Colonic mucosa (tissue), 4 donors: ENCODE measurements at regions of chr6 and their contacts with region 1.

Region 1: DNA sequence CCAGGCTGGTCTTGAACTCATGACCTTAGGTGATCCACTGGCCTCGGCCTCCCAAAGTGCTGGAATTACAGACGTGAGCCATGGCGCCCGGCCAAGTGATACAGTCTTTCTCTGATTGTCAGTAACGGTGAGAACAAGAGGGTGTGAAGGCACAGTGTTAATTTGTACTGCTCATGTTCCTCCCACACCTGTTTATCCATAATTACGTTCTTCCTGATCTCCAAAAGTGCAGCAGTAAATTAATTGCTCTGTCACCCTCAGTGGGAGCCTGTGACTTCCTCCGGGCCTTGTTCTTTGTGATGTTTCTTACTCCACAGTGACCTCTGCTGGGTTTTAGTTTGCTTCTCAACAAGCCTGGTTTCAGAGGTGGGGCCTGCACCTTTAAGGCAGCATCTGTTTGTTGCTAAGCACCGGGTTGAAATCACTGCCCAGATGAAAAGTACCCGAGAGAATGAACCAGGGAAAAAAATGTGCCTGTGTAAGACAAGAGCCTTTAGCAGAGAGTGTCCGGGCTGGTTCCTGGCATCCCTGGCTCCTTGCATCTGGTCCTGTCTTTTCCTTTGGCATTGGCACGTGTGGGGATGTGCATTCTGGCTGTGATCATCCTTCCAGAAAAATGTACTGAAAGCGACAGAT is 89.1 kb upstream of the CLDN20 start:
- DNase-seq: peak; percentile 71
- H3K4me3 ChIP-seq: no peak overlapping the region
- H3K27ac ChIP-seq: no peak overlapping the region
- H3K4me1 ChIP-seq: peaks cover 8% of the 10 kb centered on the region
- H3K27me3 ChIP-seq: no peaks in the 10 kb centered on the region
- CTCF ChIP-seq: peak; percentile 46

Region 2: DNA sequence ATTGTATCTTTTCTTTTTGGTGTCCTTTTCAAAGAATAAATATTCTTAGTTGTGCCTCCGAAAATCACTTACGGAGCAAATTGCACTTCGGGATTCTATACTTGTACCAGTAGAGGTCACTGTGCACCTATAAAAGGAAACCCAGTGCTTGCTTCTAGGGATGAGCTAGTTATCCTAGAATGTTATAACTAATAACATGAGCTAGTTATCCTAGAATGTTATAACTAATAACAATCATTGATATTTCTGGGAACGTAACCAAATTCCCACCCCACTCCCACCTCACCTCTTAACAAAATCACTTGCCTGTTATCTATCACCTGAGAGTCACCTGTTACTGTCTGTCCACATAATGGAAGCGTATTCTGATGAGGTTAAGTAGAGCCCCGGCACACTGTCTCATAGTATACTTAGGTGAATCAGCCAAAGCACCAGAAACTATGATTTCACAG is 306.5 kb before region 1 on chr6:
- intact Hi-C with region 1: loop called (anchors 2 kb)
- DNase-seq: no peak
- H3K4me3 ChIP-seq: no peak overlapping the region
- H3K27ac ChIP-seq: no peak overlapping the region
- H3K4me1 ChIP-seq: no peaks in the 10 kb centered on the region
- H3K27me3 ChIP-seq: no peaks in the 10 kb centered on the region
- CTCF ChIP-seq: peak; percentile 65

Region 3: DNA sequence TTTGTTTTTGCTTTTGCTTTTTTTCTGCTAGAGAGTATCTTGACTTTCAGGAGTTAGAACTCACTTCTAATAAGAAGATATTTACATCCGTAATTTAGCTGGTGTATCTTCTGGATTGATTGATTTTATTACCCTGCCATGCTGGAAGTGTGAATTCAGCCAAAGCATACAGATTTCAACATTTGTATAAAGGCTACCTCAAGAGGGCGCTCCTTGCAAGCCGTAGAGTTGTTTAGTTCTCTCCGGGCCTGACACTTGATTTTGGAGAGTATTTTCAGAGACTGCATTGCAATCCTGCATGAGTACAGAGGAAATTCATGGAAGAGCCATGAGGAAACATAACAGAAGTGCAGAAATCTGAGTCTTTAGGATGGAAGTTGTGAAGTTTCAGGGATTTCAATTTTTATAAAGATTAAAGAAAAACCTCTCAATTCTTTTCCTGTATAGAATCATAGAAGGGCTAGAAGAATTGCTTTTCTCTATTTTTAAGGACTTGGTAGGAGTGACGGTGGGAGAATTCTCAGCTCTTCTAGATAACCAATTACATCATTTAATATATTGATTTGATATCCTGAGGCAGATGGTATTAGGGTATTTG is 246.3 kb before region 1 on chr6:
- intact Hi-C with region 1: loop called (anchors 2 kb)
- DNase-seq: peak; percentile 70
- H3K4me3 ChIP-seq: no peak overlapping the region
- H3K27ac ChIP-seq: no peak overlapping the region
- H3K4me1 ChIP-seq: no peaks in the 10 kb centered on the region
- H3K27me3 ChIP-seq: no peaks in the 10 kb centered on the region
- CTCF ChIP-seq: peak; percentile 54

Region 4: DNA sequence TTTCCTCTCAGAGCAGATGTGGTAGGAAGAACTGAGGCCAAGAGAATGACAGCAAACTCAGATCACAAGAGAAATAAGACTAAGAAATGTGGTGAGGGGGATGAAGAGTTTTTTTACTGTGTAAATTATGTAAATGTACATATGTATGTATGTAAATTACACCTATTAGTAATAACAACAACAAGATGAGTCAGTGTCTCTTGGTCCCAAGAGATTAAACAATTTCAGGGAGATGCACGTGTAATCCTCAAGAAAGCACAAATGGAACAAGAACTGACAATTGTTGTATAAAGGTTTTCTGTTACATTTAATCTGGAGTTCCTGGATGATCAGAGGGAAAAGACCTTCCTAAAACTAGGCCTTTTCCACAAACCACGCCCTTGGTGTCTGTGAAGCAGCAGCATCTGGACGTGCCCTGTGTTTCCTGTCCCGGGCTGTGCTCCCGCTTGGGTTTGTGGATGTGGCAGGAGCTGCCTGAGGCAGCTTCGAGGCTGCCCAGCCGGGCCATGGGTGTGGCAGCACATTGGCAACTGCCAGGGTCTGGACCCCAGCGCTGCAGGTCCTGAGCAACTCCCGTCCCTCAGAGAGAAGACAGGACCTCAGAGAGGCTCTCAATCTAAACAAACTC is 90.1 kb after region 1 on chr6:
- intact Hi-C with region 1: no loop called
- DNase-seq: no peak
- H3K4me3 ChIP-seq: no peak overlapping the region
- H3K27ac ChIP-seq: no peak overlapping the region
- H3K4me1 ChIP-seq: no peaks in the 10 kb centered on the region
- H3K27me3 ChIP-seq: no peaks in the 10 kb centered on the region
- CTCF ChIP-seq: no peak